Vagina (tissue), 2 donors: ENCODE measurements at regions of chr15 and their contacts with region 1.

Region 1: GRCh38 chr15:73573572-73573971 is 59.6 kb downstream of the NPTN start:
- DNase-seq: no peak
- H3K4me3 ChIP-seq: no peak overlapping the region
- H3K27ac ChIP-seq: no peak overlapping the region
- H3K4me1 ChIP-seq: peaks cover 46% of the 10 kb centered on the region
- H3K27me3 ChIP-seq: no peaks in the 10 kb centered on the region
- CTCF ChIP-seq: no peak
- POLR2A ChIP-seq: no peak

Region 2: DNA sequence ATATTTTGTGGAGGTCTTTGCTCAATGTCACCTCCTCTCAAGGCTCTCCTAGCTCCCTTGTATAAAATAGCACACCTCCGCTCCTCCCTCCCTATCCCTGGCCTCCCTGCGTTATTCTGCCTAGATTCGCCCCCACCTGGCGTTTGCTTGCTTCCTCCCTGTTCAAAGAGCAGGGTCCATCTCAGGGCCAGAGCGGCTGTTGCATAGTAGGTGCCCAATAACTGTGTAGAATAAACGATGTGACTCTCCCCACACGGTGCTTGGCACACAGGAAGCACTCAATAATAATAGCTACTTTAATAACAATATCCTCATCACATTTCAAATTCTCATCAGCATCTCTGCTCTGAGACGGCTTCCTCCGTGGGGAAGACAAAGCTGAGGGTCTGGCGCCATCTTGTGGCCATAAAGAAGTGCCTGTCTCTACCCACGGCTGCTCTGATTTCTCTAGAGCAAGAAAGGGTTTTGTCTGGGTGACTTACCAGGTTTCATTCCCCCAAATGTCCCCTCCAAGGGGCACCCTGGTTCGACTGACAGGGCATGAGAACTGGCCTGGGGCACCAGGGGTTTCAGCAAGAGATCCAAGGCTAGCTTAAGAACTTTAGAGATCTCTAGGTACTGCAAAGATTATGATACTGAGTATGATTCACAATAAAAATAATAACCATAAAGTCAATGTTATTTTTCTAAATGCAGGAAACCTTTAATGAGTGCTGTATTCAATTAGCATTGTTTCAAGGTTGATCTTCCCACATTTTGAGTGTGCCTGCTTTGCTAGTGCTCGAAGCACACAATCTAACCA is 126.7 kb after region 1 on chr15:
- intact Hi-C with region 1: loop called (anchors 10 kb)
- DNase-seq: no peak
- H3K4me3 ChIP-seq: no peak overlapping the region
- H3K27ac ChIP-seq: no peak overlapping the region
- H3K4me1 ChIP-seq: peaks cover 28% of the 10 kb centered on the region
- H3K27me3 ChIP-seq: no peaks in the 10 kb centered on the region
- CTCF ChIP-seq: peak; percentile 91 to 93 (median 92)
- POLR2A ChIP-seq: no peak